ENCODE measurements at regions of chr1 and their contacts with region 1.

Region 1: DNA sequence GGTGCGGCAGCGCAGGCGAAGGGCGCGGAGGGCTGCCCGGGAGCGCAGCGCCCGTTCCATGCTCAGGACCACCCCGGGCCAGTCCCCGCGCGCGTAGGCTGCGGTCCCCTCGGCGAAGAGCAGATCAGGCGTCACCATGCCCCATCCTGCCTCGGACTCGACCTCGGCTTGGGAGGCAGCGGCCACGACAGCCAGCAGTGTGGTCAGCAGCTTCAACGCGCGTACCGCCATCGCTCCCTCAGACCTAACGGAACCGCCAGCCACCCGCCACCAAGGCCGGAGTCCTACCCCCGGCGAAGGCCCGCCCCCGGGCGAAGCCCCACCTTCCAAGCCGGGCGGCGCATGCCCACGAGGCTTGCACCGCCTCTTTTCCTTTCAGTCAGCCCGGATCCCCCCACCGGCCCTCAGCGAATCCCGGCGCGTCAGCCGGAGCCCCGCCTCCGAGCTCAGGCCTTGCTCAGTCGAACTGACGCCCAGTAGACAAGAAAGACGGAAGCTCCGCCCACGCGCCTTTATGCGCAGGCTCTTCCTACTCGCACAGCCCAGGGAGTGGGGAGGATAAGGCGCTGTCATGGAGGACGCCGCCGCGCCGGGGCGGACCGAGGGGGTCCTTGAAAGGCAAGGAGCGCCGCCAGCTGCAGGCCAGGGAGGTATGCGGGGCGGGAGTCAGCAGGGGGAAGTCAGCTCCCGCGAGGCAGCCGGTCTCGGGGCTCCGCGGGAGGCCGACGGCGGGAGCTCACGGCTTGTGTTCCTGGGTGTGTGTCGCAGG is at the starts of genes C1orf50 and P3H1:
- DNase-seq: peak; percentile 100
- ATAC-seq: peak; percentile 91
- H3K4me3 Mint-ChIP-seq: no peak within 1 kb of the TSS; the same call in 1 of the 2 replicates
- H3K27ac Mint-ChIP-seq: peak within 1 kb of the TSS; percentile 86
- H3K4me1 Mint-ChIP-seq: peaks cover 12% of the 10 kb centered on the region
- H3K27me3 Mint-ChIP-seq: no peaks in the 10 kb centered on the region
- CTCF ChIP-seq: no peak
- total RNA-seq, gene C1orf50: 5.1 to 6.3 TPM (median 5.3 TPM) in 3 replicates
- total RNA-seq, gene P3H1: 78.1 to 95.1 TPM (median 80.3 TPM) in 3 replicates

Region 2: DNA sequence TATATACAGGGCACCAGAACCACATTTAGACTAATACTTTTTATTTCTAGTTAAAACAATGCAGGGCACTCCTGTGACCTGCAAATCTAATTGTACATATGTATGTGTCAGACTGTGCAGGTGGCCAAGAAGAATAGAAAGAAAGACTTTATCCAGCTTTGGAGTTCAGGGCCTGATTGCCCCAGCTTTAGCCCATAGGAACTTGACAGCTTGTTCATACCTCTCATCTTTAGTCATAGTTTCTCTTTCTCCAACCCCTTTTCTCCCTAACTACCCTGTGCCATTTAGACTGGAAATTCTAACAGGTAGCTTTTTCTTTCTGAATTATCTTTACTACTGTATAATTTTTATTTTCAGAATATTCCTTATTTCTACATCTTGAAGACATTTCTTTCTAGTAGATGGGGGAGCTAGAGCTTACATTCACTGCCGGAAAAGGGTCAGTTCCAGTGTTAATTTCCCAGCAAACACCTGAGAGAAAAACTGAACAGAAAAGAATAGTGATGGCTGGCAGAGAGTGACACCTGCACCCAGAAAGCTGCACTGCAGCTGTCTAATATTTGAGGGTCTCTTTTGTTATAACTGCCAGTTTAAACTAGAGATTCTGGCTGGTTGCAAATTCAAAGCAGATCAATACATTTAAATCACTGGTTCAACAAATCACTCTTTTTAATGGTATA is 76.3 kb before region 1 on chr1:
- CTCF ChIA-PET with region 1: interaction called, 15 read pairs
- POLR2A ChIA-PET with region 1: no interaction called
- DNase-seq: no peak
- ATAC-seq: no peak
- H3K4me3 Mint-ChIP-seq: no peak overlapping the region
- H3K27ac Mint-ChIP-seq: no peak overlapping the region
- H3K4me1 Mint-ChIP-seq: peaks cover 68% of the 10 kb centered on the region
- H3K27me3 Mint-ChIP-seq: no peaks in the 10 kb centered on the region
- CTCF ChIP-seq: no peak

Region 3: GRCh38 chr1:42736150-42736850 is 30.6 kb before region 1 on chr1:
- CTCF ChIA-PET with region 1: interaction called, 18 read pairs
- POLR2A ChIA-PET with region 1: interaction called, 6 read pairs
- DNase-seq: peak; percentile 55
- ATAC-seq: peak; percentile 16
- H3K4me3 Mint-ChIP-seq: no peak overlapping the region
- H3K27ac Mint-ChIP-seq: peak overlapping the region; percentile 15; the same call in 1 of the 2 replicates
- H3K4me1 Mint-ChIP-seq: peaks cover 32% of the 10 kb centered on the region
- H3K27me3 Mint-ChIP-seq: no peaks in the 10 kb centered on the region
- CTCF ChIP-seq: no peak

Region 4: DNA sequence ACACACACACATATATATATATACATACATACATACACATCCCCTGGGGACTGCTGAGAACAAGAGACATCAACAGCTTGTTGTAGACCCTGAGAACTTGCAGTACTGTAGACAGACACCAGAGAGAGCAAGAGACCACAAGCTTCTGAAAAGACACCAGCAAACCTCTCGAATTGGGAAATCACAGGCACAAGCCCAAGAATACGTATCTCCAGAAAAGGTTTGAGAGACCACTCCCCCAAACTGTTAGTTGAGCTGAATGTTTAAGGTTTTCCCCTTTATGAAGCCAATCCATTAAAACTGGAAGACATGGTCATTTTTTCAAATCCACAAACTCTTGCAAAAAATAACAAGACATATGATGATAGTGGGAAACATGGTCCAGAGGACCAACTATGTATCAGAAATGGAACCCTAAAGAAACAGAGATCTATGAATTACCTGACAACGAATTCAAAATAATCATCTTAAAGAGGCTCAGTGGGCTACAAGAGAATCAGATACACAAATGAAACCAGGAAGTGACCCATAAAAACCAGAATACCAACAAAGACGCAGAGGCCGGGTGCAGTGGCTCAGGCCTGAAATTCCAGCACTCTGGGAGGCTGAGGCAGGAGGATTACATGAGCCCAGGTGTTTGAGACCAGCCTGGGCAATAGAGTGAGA is 146.6 kb after region 1 on chr1:
- CTCF ChIA-PET with region 1: interaction called, 12 read pairs
- POLR2A ChIA-PET with region 1: no interaction called
- DNase-seq: peak; percentile 53
- ATAC-seq: peak; percentile 94
- H3K4me3 Mint-ChIP-seq: no peak overlapping the region
- H3K27ac Mint-ChIP-seq: no peak overlapping the region
- H3K4me1 Mint-ChIP-seq: no peaks in the 10 kb centered on the region; the same call in 1 of the 2 replicates
- H3K27me3 Mint-ChIP-seq: peaks cover 7% of the 10 kb centered on the region
- CTCF ChIP-seq: peak; percentile 72

Region 5: GRCh38 chr1:42924082-42924850 is 157.3 kb after region 1 on chr1:
- CTCF ChIA-PET with region 1: interaction called, 12 read pairs
- POLR2A ChIA-PET with region 1: interaction called, 3 read pairs
- DNase-seq: peak; percentile 97
- ATAC-seq: peak; percentile 84
- H3K4me3 Mint-ChIP-seq: peak overlapping the region; percentile 81
- H3K27ac Mint-ChIP-seq: peak overlapping the region; percentile 95
- H3K4me1 Mint-ChIP-seq: peaks cover 52% of the 10 kb centered on the region
- H3K27me3 Mint-ChIP-seq: no peaks in the 10 kb centered on the region
- CTCF ChIP-seq: no peak

Region 6: GRCh38 chr1:42963378-42964190 is 196.7 kb after region 1 on chr1:
- CTCF ChIA-PET with region 1: no interaction called
- POLR2A ChIA-PET with region 1: no interaction called
- DNase-seq: no peak
- ATAC-seq: no peak
- H3K4me3 Mint-ChIP-seq: peak overlapping the region; percentile 52
- H3K27ac Mint-ChIP-seq: peak overlapping the region; percentile 98
- H3K4me1 Mint-ChIP-seq: peaks cover 58% of the 10 kb centered on the region
- H3K27me3 Mint-ChIP-seq: no peaks in the 10 kb centered on the region
- CTCF ChIP-seq: no peak

Region 7: GRCh38 chr1:42979896-42980800 is 213.2 kb after region 1 on chr1:
- CTCF ChIA-PET with region 1: no interaction called
- POLR2A ChIA-PET with region 1: no interaction called
- DNase-seq: no peak
- ATAC-seq: no peak
- H3K4me3 Mint-ChIP-seq: no peak overlapping the region
- H3K27ac Mint-ChIP-seq: peak overlapping the region; percentile 58; the same call in 1 of the 2 replicates
- H3K4me1 Mint-ChIP-seq: peaks cover 38% of the 10 kb centered on the region
- H3K27me3 Mint-ChIP-seq: no peaks in the 10 kb centered on the region
- CTCF ChIP-seq: no peak

Region 8: DNA sequence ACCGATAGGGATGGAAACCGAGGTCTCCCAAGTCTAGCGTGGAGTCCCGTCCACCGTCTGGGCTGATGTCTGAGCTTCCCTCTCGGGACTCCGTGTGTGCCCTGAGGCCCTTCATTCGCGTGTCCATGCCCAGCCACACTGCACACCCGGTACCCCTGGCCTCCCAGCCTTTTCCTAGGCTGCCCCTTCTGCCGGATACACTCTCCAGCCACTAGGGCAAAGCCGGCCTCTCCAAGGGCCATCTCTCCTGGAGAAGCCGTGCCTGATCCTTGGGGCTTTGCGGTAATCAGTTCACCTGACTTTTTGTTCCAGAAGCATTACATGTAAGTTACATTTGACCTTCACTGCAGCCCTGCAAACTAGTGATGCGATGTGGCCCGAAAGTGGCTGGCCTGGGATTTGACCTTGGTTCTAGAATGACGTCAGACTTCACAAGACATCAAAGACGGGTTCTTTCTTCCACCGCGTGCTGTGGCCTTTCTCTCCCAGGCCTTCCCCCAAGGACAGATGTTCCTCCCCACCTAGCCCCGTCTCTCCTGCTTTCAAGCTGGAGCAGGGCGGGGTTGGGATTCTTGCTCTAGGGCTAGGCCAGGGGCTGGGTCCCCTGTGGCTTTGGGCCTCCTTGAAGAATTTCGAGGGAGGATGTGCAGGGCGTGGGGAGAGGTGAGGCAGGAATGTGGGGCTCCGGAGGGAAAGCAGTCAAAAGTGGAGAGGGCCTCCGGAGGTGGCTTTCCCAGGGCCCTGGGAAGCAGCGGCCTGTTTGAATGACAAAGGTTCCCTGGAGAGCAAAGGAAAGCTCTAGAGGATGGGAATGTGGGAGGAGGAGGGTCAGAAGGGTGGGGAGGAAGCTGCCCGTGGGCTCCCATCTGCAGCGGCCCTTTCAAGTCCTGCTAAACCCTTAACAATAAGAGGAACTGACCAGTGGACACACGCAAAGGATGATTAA is 241.5 kb after region 1 on chr1:
- CTCF ChIA-PET with region 1: no interaction called
- POLR2A ChIA-PET with region 1: interaction called, 11 read pairs
- DNase-seq: peak; percentile 97
- ATAC-seq: peak; percentile 85
- H3K4me3 Mint-ChIP-seq: peak overlapping the region; percentile 61
- H3K27ac Mint-ChIP-seq: peak overlapping the region; percentile 100
- H3K4me1 Mint-ChIP-seq: peaks cover 66% of the 10 kb centered on the region
- H3K27me3 Mint-ChIP-seq: no peaks in the 10 kb centered on the region
- CTCF ChIP-seq: no peak

Measured in WTC11 (cell line).